ENCODE measurements at regions of chr11 and their contacts with region 1.

Region 1: GRCh38 chr11:85011173-85011572 is 616.0 kb downstream of the DLG2 start:
- DNase-seq: no peak
- ATAC-seq: no peak
- H3K4me3 ChIP-seq: no peak overlapping the region
- H3K4me3 Mint-ChIP-seq: no peak overlapping the region
- H3K27ac ChIP-seq: no peak overlapping the region
- H3K27ac Mint-ChIP-seq: no peak overlapping the region
- H3K4me1 ChIP-seq: no peaks in the 10 kb centered on the region
- H3K4me1 Mint-ChIP-seq: no peaks in the 10 kb centered on the region
- H3K27me3 ChIP-seq: no peaks in the 10 kb centered on the region
- H3K27me3 Mint-ChIP-seq: no peaks in the 10 kb centered on the region
- CTCF ChIP-seq: no peak

Region 2: GRCh38 chr11:83895516-83895915 is 1115.7 kb before region 1 on chr11:
- CTCF ChIA-PET with region 1: no interaction called
- POLR2A ChIA-PET with region 1: no interaction called
- intact Hi-C with region 1: no loop called
- DNase-seq: no peak
- ATAC-seq: no peak
- H3K4me3 ChIP-seq: no peak overlapping the region
- H3K4me3 Mint-ChIP-seq: no peak overlapping the region
- H3K27ac ChIP-seq: no peak overlapping the region
- H3K27ac Mint-ChIP-seq: no peak overlapping the region
- H3K4me1 ChIP-seq: no peaks in the 10 kb centered on the region
- H3K4me1 Mint-ChIP-seq: no peaks in the 10 kb centered on the region
- H3K27me3 ChIP-seq: no peaks in the 10 kb centered on the region
- H3K27me3 Mint-ChIP-seq: no peaks in the 10 kb centered on the region
- CTCF ChIP-seq: no peak

Region 3: DNA sequence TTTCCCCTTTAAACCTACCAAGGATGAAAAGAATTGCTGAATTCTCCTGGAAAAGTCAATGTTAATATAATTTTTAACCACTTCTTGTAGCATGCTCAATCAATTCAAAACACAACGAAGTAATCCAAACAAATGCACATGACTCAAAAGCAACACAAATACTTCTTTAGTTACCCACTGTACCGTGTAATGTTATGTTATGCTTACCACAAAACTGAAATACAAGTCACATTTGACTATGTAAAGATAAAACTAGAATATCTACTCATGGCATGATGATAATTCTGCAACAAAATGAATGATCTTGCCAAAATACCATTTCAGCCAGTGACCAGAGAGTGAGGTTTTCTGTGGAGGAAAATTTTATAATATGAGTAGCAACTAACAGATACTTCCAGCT is 29.0 kb after region 1 on chr11:
- CTCF ChIA-PET with region 1: no interaction called
- POLR2A ChIA-PET with region 1: no interaction called
- intact Hi-C with region 1: loop called in 1 of 2 experiments (anchors 1 kb)
- DNase-seq: no peak
- ATAC-seq: no peak
- H3K4me3 ChIP-seq: no peak overlapping the region
- H3K4me3 Mint-ChIP-seq: no peak overlapping the region
- H3K27ac ChIP-seq: no peak overlapping the region
- H3K27ac Mint-ChIP-seq: no peak overlapping the region
- H3K4me1 ChIP-seq: no peaks in the 10 kb centered on the region
- H3K4me1 Mint-ChIP-seq: no peaks in the 10 kb centered on the region
- H3K27me3 ChIP-seq: no peaks in the 10 kb centered on the region
- H3K27me3 Mint-ChIP-seq: no peaks in the 10 kb centered on the region
- CTCF ChIP-seq: no peak

Measured in CD4-positive, alpha-beta T cell (primary cell).